ENCODE measurements at regions of chr12 and their contacts with region 1.

Region 1: DNA sequence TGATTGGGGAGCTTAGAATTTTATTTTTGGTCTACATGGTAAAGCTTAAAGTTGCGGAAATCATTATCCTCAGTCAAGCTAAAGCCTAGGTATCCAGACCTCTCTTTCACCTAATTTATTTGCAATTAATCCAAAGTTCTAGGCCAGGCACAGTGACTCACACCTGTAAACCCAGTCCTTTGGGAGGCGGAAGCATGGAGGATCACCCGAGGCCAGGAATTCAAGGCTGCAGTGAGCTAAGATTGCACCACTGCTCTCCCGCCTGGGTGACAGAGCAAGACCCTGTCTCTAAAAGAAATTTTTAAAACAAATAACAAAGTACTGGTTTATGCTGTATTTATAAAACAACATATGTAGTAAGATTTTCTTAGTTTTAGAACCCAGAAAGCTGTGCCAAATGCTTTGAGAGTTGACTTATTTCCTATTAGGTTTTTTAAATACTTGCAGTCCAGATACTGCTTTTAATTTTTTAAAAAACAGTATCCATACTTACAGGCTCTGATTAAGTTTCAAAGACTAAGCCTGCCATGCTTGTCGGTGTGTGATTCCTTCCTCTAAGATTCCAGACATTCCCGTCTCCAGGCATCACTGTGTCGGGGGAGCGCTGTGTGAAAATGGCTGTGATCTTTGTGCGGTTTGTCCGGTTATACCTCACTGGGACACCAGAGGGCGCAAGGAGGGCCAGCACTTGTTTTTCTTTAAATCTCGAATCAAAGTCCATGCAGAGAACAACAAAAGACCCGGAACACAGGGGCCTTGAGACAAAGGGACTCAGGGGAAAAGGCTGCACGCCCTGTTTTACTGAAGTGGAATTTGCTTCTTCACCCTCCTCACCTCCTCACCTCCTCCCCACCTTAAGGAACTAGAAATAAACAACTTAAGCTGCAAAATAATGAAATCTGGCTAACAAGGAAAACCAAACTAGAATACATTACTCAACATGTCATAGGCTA is 24.6 kb upstream of the TMPO start:
- DNase-seq: peak; percentile 90
- ATAC-seq: peak; percentile 97
- H3K4me3 Mint-ChIP-seq: peak overlapping the region; percentile 34
- H3K27ac Mint-ChIP-seq: peak overlapping the region; percentile 88
- H3K4me1 Mint-ChIP-seq: peaks cover 7% of the 10 kb centered on the region
- H3K27me3 Mint-ChIP-seq: no peaks in the 10 kb centered on the region
- CTCF ChIP-seq: peak; percentile 85

Region 2: GRCh38 chr12:98109266-98109665 is 381.5 kb before region 1 on chr12:
- CTCF ChIA-PET with region 1: no interaction called
- POLR2A ChIA-PET with region 1: no interaction called
- intact Hi-C with region 1: no loop called
- DNase-seq: no peak
- ATAC-seq: no peak
- H3K4me3 Mint-ChIP-seq: no peak overlapping the region
- H3K27ac Mint-ChIP-seq: no peak overlapping the region
- H3K4me1 Mint-ChIP-seq: no peaks in the 10 kb centered on the region
- H3K27me3 Mint-ChIP-seq: peaks cover 1% of the 10 kb centered on the region
- CTCF ChIP-seq: no peak

Region 3: DNA sequence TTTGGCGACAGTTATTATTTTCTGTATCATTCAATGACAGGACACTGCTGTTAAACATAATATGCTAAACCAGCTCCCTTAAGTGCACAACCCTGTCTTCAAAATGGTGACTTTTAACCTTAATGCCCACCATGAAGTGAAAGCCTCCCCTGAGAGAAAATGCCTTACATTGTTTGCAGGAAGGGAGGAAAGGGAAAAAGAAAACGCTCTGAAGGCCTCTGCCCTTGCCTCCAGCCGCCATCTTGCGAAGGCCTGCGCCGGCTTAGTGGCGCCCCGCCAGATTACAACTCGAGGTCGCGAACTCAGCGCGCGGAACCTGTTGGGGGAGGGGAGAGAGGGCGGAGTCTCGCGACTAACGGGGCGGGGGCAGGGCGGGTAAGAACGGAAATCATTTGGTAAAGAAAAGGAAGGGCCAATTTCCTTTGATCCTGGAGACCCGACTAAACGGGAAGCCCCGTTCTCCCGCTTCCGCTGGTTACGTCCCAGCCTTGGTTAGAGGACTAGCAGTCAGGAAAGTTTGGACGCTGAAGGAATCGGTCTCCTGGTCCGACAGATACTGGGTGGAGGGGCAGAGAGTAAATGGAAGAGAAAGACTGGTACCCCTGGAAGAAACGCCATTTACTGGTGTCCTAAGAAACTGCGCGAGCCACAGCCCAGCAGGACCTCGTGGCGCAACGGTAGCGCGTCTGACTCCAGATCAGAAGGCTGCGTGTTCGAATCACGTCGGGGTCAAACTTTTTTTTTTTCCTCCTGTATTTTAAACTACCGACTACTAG is 13.0 kb after region 1 on chr12:
- CTCF ChIA-PET with region 1: interaction called, 12 read pairs
- POLR2A ChIA-PET with region 1: interaction called, 4 read pairs
- intact Hi-C with region 1: no loop called
- DNase-seq: peak; percentile 96
- ATAC-seq: peak; percentile 88
- H3K4me3 Mint-ChIP-seq: peak overlapping the region; percentile 95
- H3K27ac Mint-ChIP-seq: peak overlapping the region; percentile 100
- H3K4me1 Mint-ChIP-seq: peaks cover 31% of the 10 kb centered on the region
- H3K27me3 Mint-ChIP-seq: peaks cover 6% of the 10 kb centered on the region
- CTCF ChIP-seq: no peak

Region 4: GRCh38 chr12:98653866-98654493 is 163.2 kb after region 1 on chr12:
- CTCF ChIA-PET with region 1: interaction called, 11 read pairs
- POLR2A ChIA-PET with region 1: no interaction called
- intact Hi-C with region 1: no loop called
- DNase-seq: no peak
- ATAC-seq: no peak
- H3K4me3 Mint-ChIP-seq: no peak overlapping the region
- H3K27ac Mint-ChIP-seq: no peak overlapping the region
- H3K4me1 Mint-ChIP-seq: peaks cover 15% of the 10 kb centered on the region
- H3K27me3 Mint-ChIP-seq: no peaks in the 10 kb centered on the region
- CTCF ChIP-seq: peak; percentile 55